ENCODE measurements at regions of chr4 and their contacts with region 1.

Region 1: GRCh38 chr4:16001484-16001858 is 38.5 kb upstream of the FGFBP2 start:
- DNase-seq: peak; percentile 82 to 95 (median 93)
- H3K4me3 ChIP-seq: no peak overlapping the region
- H3K27ac ChIP-seq: no peak overlapping the region
- H3K4me1 ChIP-seq: peaks cover 0 to 12% (median 7%) of the 10 kb centered on the region in 4 experiments
- H3K27me3 ChIP-seq: no peaks in the 10 kb centered on the region

Region 2: GRCh38 chr4:15882675-15883086 is 118.8 kb before region 1 on chr4:
- CTCF ChIA-PET with region 1: interaction called, 12 read pairs
- POLR2A ChIA-PET with region 1: no interaction called
- DNase-seq: peak; percentile 74 to 87 (median 84)
- H3K4me3 ChIP-seq: no peak overlapping the region
- H3K27ac ChIP-seq: no peak overlapping the region
- H3K4me1 ChIP-seq: no peaks in the 10 kb centered on the region
- H3K27me3 ChIP-seq: peaks cover 0 to 2% (median 0%) of the 10 kb centered on the region in 5 experiments

Region 3: DNA sequence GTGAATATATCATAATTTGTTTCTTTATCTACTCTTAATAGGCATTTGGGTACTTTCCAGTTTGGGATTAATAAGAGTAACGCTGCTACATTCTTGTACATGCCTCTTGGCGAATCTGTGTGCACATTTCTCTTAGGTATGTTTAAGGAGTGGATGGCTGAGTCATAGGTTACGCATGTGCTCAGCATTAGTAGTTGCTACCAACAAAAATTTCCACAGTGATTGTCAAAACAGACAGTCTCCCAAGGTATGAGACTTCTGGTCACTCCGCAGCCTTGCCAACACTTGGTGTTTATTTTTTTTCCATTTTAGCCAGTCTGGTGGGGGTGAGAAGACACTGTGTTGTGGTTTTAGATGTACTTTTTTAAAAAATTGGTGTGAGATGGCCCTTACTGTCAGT is 107.5 kb before region 1 on chr4:
- CTCF ChIA-PET with region 1: no interaction called
- POLR2A ChIA-PET with region 1: no interaction called
- DNase-seq: no peak
- H3K4me3 ChIP-seq: no peak overlapping the region
- H3K27ac ChIP-seq: no peak overlapping the region
- H3K4me1 ChIP-seq: peaks cover 3 to 6% (median 5%) of the 10 kb centered on the region in 4 experiments
- H3K27me3 ChIP-seq: no peaks in the 10 kb centered on the region

Region 4: GRCh38 chr4:15963001-15963451 is 38.4 kb before region 1 on chr4 and contains the start of gene FGFBP2:
- CTCF ChIA-PET with region 1: interaction called, 12 read pairs
- POLR2A ChIA-PET with region 1: interaction called, 3 read pairs
- DNase-seq: peak; percentile 71 to 88 (median 84)
- H3K4me3 ChIP-seq: peak within 1 kb of the TSS in 2 of 7 experiments; percentile 23 to 46
- H3K27ac ChIP-seq: no peak within 1 kb of the TSS
- H3K4me1 ChIP-seq: peaks cover 5 to 15% (median 10%) of the 10 kb centered on the region in 4 experiments
- H3K27me3 ChIP-seq: no peaks in the 10 kb centered on the region

Region 5: DNA sequence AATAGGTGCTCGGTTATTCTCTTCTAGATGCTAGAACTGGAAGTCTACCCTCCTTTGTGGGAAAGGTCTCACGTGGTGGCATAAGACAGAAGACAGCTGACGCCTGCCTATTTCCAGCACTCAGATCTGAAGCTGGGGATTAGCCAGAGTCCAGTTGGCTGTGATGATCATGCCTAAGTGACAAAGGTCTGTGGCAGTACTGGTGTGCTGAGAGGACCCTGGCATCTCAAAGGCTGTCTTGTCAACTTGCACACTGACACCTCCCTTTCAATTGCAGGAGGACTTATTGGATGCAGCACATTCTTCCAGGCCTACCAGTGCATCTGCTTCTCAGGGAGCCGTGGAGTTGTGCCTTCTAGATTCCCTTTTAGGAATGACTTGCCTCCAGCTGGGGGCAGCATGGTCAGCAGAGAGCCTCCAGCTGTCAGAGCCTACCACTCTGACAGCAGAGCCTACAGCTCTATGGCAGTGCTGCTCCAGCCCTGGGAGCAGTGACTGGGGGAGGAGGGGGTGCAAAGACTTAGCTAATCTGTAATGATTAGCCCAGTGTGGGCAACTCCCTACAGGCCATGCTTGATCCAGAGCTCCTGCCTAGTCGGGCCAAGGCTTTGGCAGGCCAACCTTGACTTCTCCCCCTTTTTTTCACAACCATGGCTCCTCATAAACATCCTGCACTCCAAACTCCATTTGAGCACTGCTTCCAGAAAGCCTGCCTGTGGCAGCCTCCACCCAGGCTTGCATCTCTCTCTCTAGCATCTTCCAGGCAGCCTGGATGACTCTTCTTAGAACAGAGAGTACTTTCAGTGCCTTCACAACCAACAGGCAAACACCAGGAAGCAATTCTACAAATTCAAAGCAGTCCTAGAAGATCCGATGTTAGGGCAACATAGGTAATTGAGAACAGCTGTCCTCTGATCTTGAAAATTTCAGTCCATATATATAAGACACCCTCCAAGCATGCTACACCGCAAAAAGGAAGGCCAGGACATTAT is 24.7 kb before region 1 on chr4:
- CTCF ChIA-PET with region 1: interaction called, 14 read pairs
- POLR2A ChIA-PET with region 1: interaction called, 4 read pairs
- DNase-seq: no peak
- H3K4me3 ChIP-seq: no peak overlapping the region
- H3K27ac ChIP-seq: no peak overlapping the region
- H3K4me1 ChIP-seq: no peaks in the 10 kb centered on the region
- H3K27me3 ChIP-seq: no peaks in the 10 kb centered on the region

Region 6: DNA sequence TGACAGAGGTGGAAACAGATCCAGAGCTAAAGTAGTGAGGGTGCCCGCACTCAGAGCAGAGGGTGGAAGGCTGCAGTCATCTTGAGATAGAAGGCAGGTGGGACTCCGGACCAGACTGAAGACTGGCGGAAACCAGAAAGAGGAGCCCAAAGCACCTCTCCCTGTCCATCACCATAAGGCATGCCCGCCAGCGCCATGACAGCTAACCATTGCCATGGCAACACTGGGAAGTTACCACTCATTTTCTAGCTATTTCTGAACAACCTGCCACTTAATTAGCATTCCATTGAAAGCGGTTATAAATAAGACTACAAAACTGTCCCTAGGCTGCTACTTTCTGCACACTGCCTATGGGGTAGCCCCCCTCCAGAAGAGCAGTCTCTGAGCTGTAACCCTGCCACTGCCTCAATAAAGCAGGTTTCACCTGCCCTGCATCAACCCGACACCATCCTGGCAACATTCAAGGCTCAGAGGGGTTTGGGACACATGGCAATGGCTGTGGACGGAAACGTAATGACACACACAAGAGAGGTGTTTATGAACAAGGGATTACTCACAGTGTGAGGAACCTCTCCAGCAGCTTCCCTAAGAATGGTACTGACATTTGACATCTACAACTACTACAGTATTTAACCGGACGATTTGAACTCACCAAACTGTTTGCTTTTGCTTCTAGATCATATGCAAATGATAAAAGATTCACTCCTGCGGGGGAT is 10.7 kb before region 1 on chr4:
- CTCF ChIA-PET with region 1: interaction called, 12 read pairs
- POLR2A ChIA-PET with region 1: no interaction called
- DNase-seq: no peak
- H3K4me3 ChIP-seq: no peak overlapping the region
- H3K27ac ChIP-seq: no peak overlapping the region
- H3K4me1 ChIP-seq: peaks cover 0 to 10% (median 7%) of the 10 kb centered on the region in 4 experiments
- H3K27me3 ChIP-seq: no peaks in the 10 kb centered on the region

Measured in common myeloid progenitor, CD34-positive (primary cell).